ENCODE measurements at regions of chr9 and their contacts with region 1.

Region 1: GRCh38 chr9:22008736-22009562 is at the start of gene CDKN2B:
- DNase-seq: peak; percentile 63
- H3K4me3 Mint-ChIP-seq: peak within 1 kb of the TSS; percentile 74
- H3K27ac Mint-ChIP-seq: no peak within 1 kb of the TSS
- H3K4me1 Mint-ChIP-seq: peaks cover 18% of the 10 kb centered on the region
- H3K27me3 Mint-ChIP-seq: peaks cover 62% of the 10 kb centered on the region
- total RNA-seq, gene CDKN2B: not detected

Region 2: GRCh38 chr9:21831961-21832509 is 176.9 kb before region 1 on chr9:
- CTCF ChIA-PET with region 1: interaction called, 4 read pairs
- intact Hi-C with region 1: loop called (anchors 1 kb)
- DNase-seq: peak; percentile 83
- H3K4me3 Mint-ChIP-seq: no peak overlapping the region
- H3K27ac Mint-ChIP-seq: peak overlapping the region; percentile 77
- H3K4me1 Mint-ChIP-seq: peaks cover 65% of the 10 kb centered on the region
- H3K27me3 Mint-ChIP-seq: no peaks in the 10 kb centered on the region

Region 3: GRCh38 chr9:21974548-21975409 is 34.2 kb before region 1 on chr9:
- CTCF ChIA-PET with region 1: interaction called, 16 read pairs
- intact Hi-C with region 1: loop called (anchors 2 kb)
- DNase-seq: peak; percentile 75
- H3K4me3 Mint-ChIP-seq: peak overlapping the region; percentile 56
- H3K27ac Mint-ChIP-seq: no peak overlapping the region
- H3K4me1 Mint-ChIP-seq: peaks cover 14% of the 10 kb centered on the region
- H3K27me3 Mint-ChIP-seq: peaks cover 81% of the 10 kb centered on the region

Region 4: DNA sequence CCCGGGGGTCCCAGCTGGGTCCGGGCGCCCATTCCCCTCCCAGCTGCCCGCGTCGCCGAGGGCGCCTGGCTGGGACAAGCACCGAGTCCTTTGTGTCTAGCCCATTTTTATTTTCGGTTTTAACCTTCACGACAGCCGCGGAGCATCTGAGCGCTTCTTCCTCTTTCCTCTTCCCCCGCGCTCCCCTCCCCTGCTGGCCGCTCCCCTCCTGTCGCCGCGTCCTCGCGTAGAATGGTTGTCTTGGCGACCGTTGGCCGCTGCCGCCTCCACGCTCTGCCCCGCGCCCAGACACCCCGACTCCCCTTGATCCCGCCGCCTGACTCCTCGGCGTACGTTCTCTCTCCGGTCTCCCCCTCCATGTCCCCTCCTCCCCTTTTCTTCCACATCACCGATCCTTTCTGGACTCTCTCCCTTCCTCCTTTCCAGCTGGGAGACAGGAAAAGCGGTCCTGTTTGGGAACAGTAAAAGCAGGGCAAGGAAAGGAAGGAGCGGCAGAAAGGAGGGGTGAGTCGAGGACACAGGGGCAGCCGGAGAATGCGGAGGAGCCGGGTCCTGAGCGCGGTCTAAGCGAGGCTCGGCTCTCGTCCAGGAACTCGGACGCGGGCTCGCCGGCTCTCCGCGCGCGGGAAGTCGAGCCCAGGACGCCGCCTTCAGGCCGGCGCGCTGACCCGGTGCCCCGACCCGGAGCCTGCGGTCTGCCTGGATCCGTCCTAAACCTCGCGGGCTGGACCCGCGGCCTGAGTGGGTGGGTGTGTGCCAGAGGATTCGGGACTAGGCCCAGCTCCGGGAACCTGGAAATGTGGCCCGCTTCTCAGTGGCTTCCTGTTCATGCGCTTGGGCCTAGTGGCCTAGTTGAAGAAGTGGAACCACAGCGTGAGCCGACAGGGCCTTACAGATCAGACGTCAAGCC is 13.5 kb before region 1 on chr9:
- CTCF ChIA-PET with region 1: interaction called, 12 read pairs
- intact Hi-C with region 1: loop called (anchors 1 kb)
- DNase-seq: peak; percentile 77
- H3K4me3 Mint-ChIP-seq: peak overlapping the region; percentile 87
- H3K27ac Mint-ChIP-seq: peak overlapping the region; percentile 36
- H3K4me1 Mint-ChIP-seq: peaks cover 10% of the 10 kb centered on the region
- H3K27me3 Mint-ChIP-seq: peaks cover 42% of the 10 kb centered on the region

Region 5: DNA sequence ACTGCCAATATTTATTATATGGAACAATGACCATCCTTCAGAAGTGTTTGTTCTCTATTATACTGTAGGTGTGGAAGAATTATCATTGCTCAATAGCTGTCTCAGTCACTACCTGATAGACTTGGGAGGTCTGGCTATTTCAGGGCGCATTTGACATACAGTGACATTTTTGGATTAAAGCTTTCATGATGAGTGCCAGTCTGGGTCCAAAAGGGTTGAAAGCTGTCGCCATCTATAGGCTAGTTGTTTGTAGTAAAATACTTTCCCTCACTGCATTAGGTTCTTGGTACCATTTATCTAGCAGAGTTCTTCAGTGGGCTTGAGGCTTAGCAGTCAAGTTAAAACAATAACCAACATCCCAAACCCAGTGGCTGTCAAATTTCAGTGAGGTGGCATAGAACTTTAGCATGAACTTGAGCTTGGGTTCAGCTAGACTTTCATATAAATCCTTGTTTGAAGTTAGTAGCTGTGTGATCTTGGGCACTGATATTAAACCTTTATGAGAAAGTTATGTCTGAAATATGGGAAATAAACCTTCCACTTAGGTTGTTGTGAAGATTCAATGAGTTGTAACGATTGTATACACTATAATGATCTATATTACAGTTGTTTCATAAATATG is 110.7 kb after region 1 on chr9:
- CTCF ChIA-PET with region 1: interaction called, 10 read pairs
- intact Hi-C with region 1: loop called (anchors 1 kb)
- DNase-seq: peak; percentile 32
- H3K4me3 Mint-ChIP-seq: no peak overlapping the region
- H3K27ac Mint-ChIP-seq: no peak overlapping the region
- H3K4me1 Mint-ChIP-seq: no peaks in the 10 kb centered on the region
- H3K27me3 Mint-ChIP-seq: peaks cover 9% of the 10 kb centered on the region

Measured in activated naive CD4-positive, alpha-beta T cell treated with anti-CD3 and anti-CD28 coated beads for 36 hours (primary cell).